Naive thymus-derived CD4-positive, alpha-beta T cell (primary cell): ENCODE measurements at regions of chr10 and their contacts with region 1.

Region 1: GRCh38 chr10:112471878-112472487 is 25.0 kb downstream of the VTI1A start:
- DNase-seq: peak in 6 of 9 donors; percentile 8 to 50 (median 34)
- ATAC-seq: peak; percentile 82
- H3K4me3 ChIP-seq: no peak overlapping the region
- H3K4me3 Mint-ChIP-seq: no peak overlapping the region
- H3K27ac ChIP-seq: no peak overlapping the region
- H3K27ac Mint-ChIP-seq: peak overlapping the region in 2 of 9 donors; percentile 3 to 56
- H3K4me1 ChIP-seq: no peaks in the 10 kb centered on the region
- H3K4me1 Mint-ChIP-seq: peaks cover 4 to 27% (median 11%) of the 10 kb centered on the region in 7 donors
- H3K27me3 ChIP-seq: no peaks in the 10 kb centered on the region
- H3K27me3 Mint-ChIP-seq: no peaks in the 10 kb centered on the region

Region 2: DNA sequence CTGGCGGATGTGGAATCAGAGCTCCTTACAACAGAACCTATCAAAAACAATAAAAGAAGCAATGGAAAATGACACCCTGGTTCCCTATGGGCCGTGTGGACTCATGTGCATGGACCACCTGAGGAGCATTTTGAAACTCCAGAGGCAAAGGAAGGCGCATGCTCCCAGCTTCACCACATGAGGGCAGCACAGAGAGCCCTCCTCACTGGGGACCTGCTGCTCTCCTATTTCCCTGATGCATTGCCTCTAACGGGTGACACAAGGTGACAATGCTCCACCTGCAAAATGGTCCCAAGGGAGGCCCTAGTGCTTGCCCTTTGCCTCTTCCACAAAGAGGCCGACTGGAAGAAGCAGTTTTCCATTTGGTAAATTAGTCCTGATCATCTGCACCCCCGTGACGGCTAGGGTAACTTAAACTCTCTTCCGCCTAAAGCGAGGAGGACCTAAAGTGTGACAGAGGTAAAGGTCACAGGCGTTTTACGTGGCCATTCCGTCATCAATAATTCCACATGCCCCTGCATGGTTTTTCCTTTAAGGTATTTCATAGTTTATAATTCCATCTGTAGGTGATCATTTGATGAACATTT is 356.1 kb before region 1 on chr10:
- CTCF ChIA-PET with region 1: interaction called, 3 read pairs
- POLR2A ChIA-PET with region 1: no interaction called
- intact Hi-C with region 1: loop called in 1 of 2 experiments (anchors 2 kb)
- DNase-seq: peak in 6 of 9 donors; percentile 14 to 35 (median 22)
- ATAC-seq: peak; percentile 70
- H3K4me3 ChIP-seq: no peak overlapping the region
- H3K4me3 Mint-ChIP-seq: no peak overlapping the region
- H3K27ac ChIP-seq: no peak overlapping the region
- H3K27ac Mint-ChIP-seq: no peak overlapping the region
- H3K4me1 ChIP-seq: no peaks in the 10 kb centered on the region
- H3K4me1 Mint-ChIP-seq: peaks cover 0 to 2% (median 0%) of the 10 kb centered on the region in 7 donors
- H3K27me3 ChIP-seq: no peaks in the 10 kb centered on the region
- H3K27me3 Mint-ChIP-seq: peaks cover 0 to 5% (median 0%) of the 10 kb centered on the region in 5 donors

Region 3: GRCh38 chr10:112314822-112315474 is 157.0 kb before region 1 on chr10:
- CTCF ChIA-PET with region 1: no interaction called
- POLR2A ChIA-PET with region 1: no interaction called
- intact Hi-C with region 1: loop called in 1 of 2 experiments (anchors 2 kb)
- DNase-seq: peak; percentile 32 to 70 (median 53)
- ATAC-seq: peak; percentile 85
- H3K4me3 ChIP-seq: no peak overlapping the region
- H3K4me3 Mint-ChIP-seq: no peak overlapping the region
- H3K27ac ChIP-seq: no peak overlapping the region
- H3K27ac Mint-ChIP-seq: no peak overlapping the region
- H3K4me1 ChIP-seq: no peaks in the 10 kb centered on the region
- H3K4me1 Mint-ChIP-seq: peaks cover 0 to 2% (median 0%) of the 10 kb centered on the region in 7 donors
- H3K27me3 ChIP-seq: no peaks in the 10 kb centered on the region
- H3K27me3 Mint-ChIP-seq: peaks cover 25 to 42% (median 33%) of the 10 kb centered on the region in 5 donors

Region 4: DNA sequence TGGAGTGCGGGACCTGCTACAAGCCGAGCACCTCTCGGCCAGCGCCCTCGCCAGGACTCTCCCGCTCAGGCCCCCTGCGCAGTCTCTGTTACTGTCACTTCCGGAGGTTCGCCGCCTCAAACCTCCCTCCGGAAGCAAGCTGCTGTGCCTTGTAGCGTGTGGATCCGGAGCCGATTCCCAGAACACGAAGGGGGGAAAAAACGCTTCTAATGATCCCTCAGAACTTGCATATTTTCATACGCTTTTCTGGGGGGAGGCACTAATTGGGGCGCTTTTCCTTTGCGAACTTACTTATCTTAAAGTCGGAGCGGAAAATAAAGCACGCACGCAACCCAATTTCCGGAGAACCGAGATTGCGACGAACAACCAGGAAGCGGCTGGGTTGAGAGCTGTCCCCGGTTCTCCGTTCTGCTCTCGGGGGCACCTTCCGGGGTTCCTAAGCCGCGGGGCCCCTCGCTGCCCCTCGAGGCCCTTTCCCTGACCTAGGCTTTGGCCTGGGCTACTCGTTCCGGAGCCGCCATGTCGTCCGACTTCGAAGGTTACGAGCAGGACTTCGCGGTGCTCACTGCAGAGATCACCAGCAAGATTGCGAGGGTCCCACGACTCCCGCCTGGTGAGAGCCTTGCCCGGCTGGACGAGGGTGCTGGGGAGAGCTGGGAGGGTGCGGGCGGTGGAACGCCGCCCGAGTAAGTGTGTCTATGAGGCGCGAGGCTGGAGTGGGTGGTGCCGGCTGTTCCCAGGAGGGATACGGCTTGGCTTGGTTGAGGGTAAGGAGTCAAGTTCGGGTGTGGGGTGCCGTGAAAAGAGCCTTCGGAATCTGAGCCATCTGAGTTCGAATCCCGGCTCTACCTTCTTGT is 24.9 kb before region 1 on chr10 and contains the starts of genes VTI1A and ZDHHC6:
- CTCF ChIA-PET with region 1: interaction called, 3 read pairs
- POLR2A ChIA-PET with region 1: interaction called, 4 read pairs
- intact Hi-C with region 1: loop called in 1 of 2 experiments (anchors 2 kb)
- DNase-seq: peak; percentile 70 to 89 (median 84)
- ATAC-seq: peak; percentile 95
- H3K4me3 ChIP-seq: peak within 1 kb of the TSS; percentile 85
- H3K4me3 Mint-ChIP-seq: peak within 1 kb of the TSS; percentile 92 to 100 (median 96)
- H3K27ac ChIP-seq: peak within 1 kb of the TSS; percentile 90
- H3K27ac Mint-ChIP-seq: peak within 1 kb of the TSS; percentile 95 to 100 (median 99)
- H3K4me1 ChIP-seq: peaks cover 23 to 25% of the 10 kb centered on the region in 2 donors
- H3K4me1 Mint-ChIP-seq: peaks cover 31 to 81% (median 65%) of the 10 kb centered on the region in 7 donors
- H3K27me3 ChIP-seq: no peaks in the 10 kb centered on the region
- H3K27me3 Mint-ChIP-seq: no peaks in the 10 kb centered on the region
- total RNA-seq, gene VTI1A: 40.2 to 56.8 (median 51.4) TPM
- total RNA-seq, gene ZDHHC6: 34.3 to 66.3 (median 50.9) TPM

Region 5: GRCh38 chr10:112570585-112570984 is 98.6 kb after region 1 on chr10:
- CTCF ChIA-PET with region 1: no interaction called
- POLR2A ChIA-PET with region 1: no interaction called
- intact Hi-C with region 1: no loop called
- DNase-seq: no peak
- ATAC-seq: no peak
- H3K4me3 ChIP-seq: no peak overlapping the region
- H3K4me3 Mint-ChIP-seq: no peak overlapping the region
- H3K27ac ChIP-seq: no peak overlapping the region
- H3K27ac Mint-ChIP-seq: no peak overlapping the region
- H3K4me1 ChIP-seq: no peaks in the 10 kb centered on the region
- H3K4me1 Mint-ChIP-seq: no peaks in the 10 kb centered on the region
- H3K27me3 ChIP-seq: no peaks in the 10 kb centered on the region
- H3K27me3 Mint-ChIP-seq: no peaks in the 10 kb centered on the region

Region 6: DNA sequence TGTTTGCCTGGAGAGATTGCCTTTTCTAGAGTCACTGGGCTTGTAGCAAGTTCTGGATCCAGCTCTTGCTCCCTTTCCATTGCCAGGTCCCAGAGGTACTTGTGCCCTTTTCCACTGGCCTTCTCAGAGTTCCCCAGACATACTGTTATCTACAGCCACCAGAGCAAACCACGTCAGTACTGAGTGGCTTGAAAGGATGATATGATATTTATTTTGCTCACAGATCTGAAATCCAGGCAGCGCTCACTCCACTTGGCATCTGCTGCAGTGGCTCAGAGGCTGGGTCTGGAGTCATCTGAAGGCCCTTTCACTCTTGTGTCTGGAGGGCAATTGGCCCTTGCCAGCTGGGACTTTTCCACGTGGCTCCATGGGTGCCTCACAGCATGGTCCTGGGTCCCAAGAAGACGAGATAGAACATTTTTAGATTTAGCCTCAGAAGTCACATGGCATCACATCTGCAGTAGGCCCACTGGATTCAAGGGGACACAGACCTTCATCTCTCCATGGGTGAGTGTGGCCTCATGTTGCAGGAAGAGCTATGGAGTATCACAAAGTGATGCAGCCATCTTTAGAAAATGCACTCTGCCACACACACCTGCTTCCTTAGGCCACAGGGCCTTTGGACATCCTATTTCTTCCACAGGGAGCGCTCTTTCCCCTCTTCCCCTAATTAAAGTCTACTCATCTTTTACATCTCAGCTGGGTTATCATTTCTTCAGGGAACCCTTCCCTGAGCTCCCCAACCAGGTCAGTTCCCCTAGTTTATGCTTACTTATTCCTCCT is 455.1 kb after region 1 on chr10:
- CTCF ChIA-PET with region 1: no interaction called
- POLR2A ChIA-PET with region 1: no interaction called
- intact Hi-C with region 1: no loop called
- DNase-seq: no peak
- ATAC-seq: no peak
- H3K4me3 ChIP-seq: no peak overlapping the region
- H3K4me3 Mint-ChIP-seq: no peak overlapping the region
- H3K27ac ChIP-seq: no peak overlapping the region
- H3K27ac Mint-ChIP-seq: no peak overlapping the region
- H3K4me1 ChIP-seq: no peaks in the 10 kb centered on the region
- H3K4me1 Mint-ChIP-seq: no peaks in the 10 kb centered on the region
- H3K27me3 ChIP-seq: no peaks in the 10 kb centered on the region
- H3K27me3 Mint-ChIP-seq: peaks cover 0 to 4% (median 0%) of the 10 kb centered on the region in 5 donors

Region 7: DNA sequence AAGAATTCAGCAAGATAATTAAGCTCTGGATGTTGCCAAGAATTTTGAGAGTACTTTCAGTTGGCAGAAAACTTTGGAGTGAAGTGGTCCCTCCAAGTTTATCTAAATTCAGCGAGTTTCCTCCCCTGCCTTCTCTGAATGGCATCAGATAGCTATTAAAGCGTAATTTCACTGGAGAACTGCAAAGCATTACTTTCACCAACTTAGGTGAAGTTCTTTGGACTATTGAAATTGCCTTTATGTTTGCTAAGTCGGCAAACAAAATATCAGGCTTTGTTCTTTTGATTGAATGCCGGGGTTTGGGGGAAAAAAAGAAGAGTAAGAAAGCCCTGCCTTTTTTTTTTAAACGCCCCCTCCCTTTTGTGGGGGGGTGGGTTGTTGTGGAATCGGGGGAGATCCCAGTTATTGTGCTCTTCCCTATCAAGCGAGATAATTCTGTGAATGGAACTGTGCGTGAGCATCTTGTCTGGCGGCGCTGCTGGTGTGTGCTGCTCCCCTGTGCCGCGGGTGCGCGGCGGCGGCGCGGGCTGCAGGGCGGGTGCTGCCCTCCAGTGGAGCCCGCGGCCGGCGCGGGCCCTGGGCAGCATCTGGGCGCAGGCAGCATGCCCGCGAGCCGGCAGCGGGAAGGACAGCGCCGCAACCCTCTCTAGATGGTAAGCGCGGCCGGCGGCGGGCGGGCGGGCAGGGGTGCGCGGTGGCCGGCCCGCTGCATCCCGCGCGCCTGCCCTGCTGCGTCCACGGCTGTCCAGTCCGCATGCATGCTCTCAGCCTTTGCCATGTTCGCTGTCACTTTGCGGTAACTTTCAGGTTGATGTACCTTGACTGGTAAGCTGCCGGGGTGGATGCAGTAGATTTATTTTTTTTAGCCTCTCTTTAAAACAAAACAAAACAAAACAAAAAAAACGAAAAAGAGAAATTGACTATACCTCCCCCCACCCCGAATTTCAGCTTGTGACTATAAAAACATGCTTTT is 654.5 kb after region 1 on chr10:
- CTCF ChIA-PET with region 1: no interaction called
- POLR2A ChIA-PET with region 1: no interaction called
- intact Hi-C with region 1: loop called in 1 of 2 experiments (anchors 5 kb)
- DNase-seq: peak in 8 of 9 donors; percentile 11 to 56 (median 36)
- ATAC-seq: peak; percentile 97
- H3K4me3 ChIP-seq: no peak overlapping the region
- H3K4me3 Mint-ChIP-seq: peak overlapping the region in 8 of 10 donors; percentile 24 to 69 (median 56)
- H3K27ac ChIP-seq: no peak overlapping the region
- H3K27ac Mint-ChIP-seq: no peak overlapping the region
- H3K4me1 ChIP-seq: no peaks in the 10 kb centered on the region
- H3K4me1 Mint-ChIP-seq: peaks cover 0 to 10% (median 5%) of the 10 kb centered on the region in 7 donors
- H3K27me3 ChIP-seq: peaks cover 0 to 3% of the 10 kb centered on the region in 2 donors
- H3K27me3 Mint-ChIP-seq: peaks cover 55 to 65% (median 61%) of the 10 kb centered on the region in 5 donors

Region 8: DNA sequence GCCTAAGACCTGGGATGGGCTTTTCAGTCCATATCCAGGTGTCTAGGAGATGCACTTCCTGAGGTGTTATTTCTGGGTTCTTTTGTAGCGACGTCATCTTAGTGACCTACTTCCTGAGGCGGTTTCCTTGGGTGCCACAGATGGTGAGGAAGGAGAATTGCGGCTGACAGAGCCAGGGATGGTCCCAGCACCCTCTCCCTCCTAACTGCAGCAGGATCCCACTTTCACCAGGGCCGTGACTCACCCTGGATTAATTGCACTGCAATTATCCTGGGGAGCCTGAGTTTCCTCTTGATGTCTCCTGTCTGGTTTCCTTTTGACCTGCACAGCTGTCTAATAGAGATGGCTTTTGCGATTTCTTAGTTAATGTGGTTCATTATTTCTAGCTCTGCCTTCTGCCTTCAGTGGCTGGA is 749.8 kb after region 1 on chr10:
- CTCF ChIA-PET with region 1: no interaction called
- POLR2A ChIA-PET with region 1: no interaction called
- intact Hi-C with region 1: no loop called
- DNase-seq: peak in 3 of 9 donors; percentile 4 to 11 (median 8)
- ATAC-seq: peak; percentile 49
- H3K4me3 ChIP-seq: no peak overlapping the region
- H3K4me3 Mint-ChIP-seq: peak overlapping the region in 9 of 10 donors; percentile 20 to 80 (median 60)
- H3K27ac ChIP-seq: no peak overlapping the region
- H3K27ac Mint-ChIP-seq: peak overlapping the region in 1 of 9 donors; percentile 54
- H3K4me1 ChIP-seq: no peaks in the 10 kb centered on the region
- H3K4me1 Mint-ChIP-seq: peaks cover 4 to 32% (median 23%) of the 10 kb centered on the region in 7 donors
- H3K27me3 ChIP-seq: no peaks in the 10 kb centered on the region
- H3K27me3 Mint-ChIP-seq: peaks cover 26 to 52% (median 30%) of the 10 kb centered on the region in 5 donors

Region 9: GRCh38 chr10:113563306-113564088 is 1091.5 kb after region 1 on chr10:
- CTCF ChIA-PET with region 1: interaction called, 4 read pairs
- POLR2A ChIA-PET with region 1: no interaction called
- intact Hi-C with region 1: loop called (anchors 5 to 10 kb)
- DNase-seq: peak; percentile 24 to 69 (median 54)
- ATAC-seq: peak; percentile 90
- H3K4me3 ChIP-seq: peak overlapping the region; percentile 59
- H3K4me3 Mint-ChIP-seq: peak overlapping the region; percentile 61 to 87 (median 80)
- H3K27ac ChIP-seq: no peak overlapping the region
- H3K27ac Mint-ChIP-seq: peak overlapping the region in 2 of 9 donors; percentile 17 to 21
- H3K4me1 ChIP-seq: peaks cover 0 to 7% of the 10 kb centered on the region in 2 donors
- H3K4me1 Mint-ChIP-seq: peaks cover 0 to 8% (median 5%) of the 10 kb centered on the region in 7 donors
- H3K27me3 ChIP-seq: no peaks in the 10 kb centered on the region
- H3K27me3 Mint-ChIP-seq: peaks cover 2 to 10% (median 5%) of the 10 kb centered on the region in 5 donors